ENCODE measurements at regions of chr4 and their contacts with region 1.

Region 1: GRCh38 chr4:48681856-48682255 is 98.2 kb downstream of the FRYL start:
- DNase-seq: peak; percentile 23
- ATAC-seq: peak; percentile 98
- H3K4me3 Mint-ChIP-seq: no peak overlapping the region
- H3K27ac Mint-ChIP-seq: no peak overlapping the region
- H3K4me1 Mint-ChIP-seq: peaks cover 42% of the 10 kb centered on the region
- H3K27me3 Mint-ChIP-seq: no peaks in the 10 kb centered on the region

Region 2: DNA sequence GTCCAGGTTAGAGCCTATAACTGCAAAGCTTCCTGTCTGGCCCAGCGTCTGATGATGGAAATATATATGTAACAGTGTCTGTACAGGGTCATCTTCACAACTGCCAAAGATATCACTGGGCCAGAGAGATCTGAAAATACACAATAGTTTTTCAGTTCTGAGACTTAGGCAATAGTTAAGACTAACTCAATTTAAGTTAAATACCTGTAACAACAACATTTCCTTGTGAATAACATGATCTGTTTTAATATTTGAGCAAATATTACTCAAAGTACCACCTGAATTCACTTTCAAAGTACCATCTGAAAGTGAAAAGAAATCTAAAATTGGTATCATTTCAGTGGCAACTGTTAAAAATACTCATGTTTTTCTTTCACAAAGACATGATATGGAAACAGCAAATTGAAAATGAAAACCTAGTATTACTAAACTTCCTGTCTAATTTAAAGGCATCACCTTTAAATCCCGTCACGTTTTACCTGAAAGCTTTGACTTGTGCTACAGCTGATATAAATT is 182.2 kb before region 1 on chr4:
- CTCF ChIA-PET with region 1: no interaction called
- POLR2A ChIA-PET with region 1: no interaction called
- intact Hi-C with region 1: loop called in 1 of 2 experiments (anchors 5 kb)
- DNase-seq: no peak
- ATAC-seq: peak; percentile 73
- H3K4me3 Mint-ChIP-seq: no peak overlapping the region
- H3K27ac Mint-ChIP-seq: no peak overlapping the region
- H3K4me1 Mint-ChIP-seq: peaks cover 17% of the 10 kb centered on the region
- H3K27me3 Mint-ChIP-seq: no peaks in the 10 kb centered on the region

Region 3: DNA sequence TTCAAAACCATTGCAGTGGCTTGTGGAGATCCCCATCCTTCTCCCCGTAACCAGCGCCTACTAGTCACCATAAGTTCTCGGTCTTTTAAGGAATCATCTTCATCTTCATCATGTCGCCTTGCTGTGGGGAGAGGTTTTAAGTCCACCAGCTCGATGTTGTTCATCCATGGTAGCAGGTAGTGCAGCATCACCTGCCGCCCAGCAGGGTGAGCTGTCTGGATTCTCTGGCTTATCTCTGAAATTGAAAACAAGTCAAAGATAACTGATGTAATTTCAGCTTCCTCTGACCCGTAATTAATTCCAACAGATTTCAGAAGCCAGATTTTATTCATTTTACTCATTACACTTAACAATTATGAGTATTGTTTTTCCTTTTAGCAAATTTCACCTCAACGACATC is 124.4 kb before region 1 on chr4:
- CTCF ChIA-PET with region 1: interaction called, 3 read pairs
- POLR2A ChIA-PET with region 1: no interaction called
- intact Hi-C with region 1: loop called in 1 of 2 experiments (anchors 5 kb)
- DNase-seq: peak; percentile 46
- ATAC-seq: peak; percentile 44
- H3K4me3 Mint-ChIP-seq: no peak overlapping the region
- H3K27ac Mint-ChIP-seq: no peak overlapping the region
- H3K4me1 Mint-ChIP-seq: peaks cover 10% of the 10 kb centered on the region
- H3K27me3 Mint-ChIP-seq: no peaks in the 10 kb centered on the region

Region 4: DNA sequence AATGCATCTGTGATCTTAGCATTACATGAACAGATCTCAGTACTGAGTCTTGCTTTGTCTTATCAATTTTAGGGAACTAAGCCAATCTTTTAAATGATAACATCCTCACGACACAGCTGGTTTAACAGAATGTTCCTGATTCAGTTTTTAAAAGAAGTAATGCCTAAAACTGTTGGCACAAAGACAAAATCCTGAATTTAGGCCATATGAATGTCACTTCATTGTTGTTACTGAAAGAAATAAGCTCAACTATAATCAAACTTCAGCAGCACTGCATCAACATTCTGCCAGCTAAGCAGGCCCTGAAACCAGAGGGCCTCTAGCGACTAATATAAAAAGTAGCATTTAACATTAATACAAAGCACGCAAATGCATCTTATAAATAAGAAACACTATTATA is 32.4 kb before region 1 on chr4:
- CTCF ChIA-PET with region 1: interaction called, 4 read pairs
- POLR2A ChIA-PET with region 1: no interaction called
- intact Hi-C with region 1: loop called in 1 of 2 experiments (anchors 5 kb)
- DNase-seq: no peak
- ATAC-seq: no peak
- H3K4me3 Mint-ChIP-seq: no peak overlapping the region
- H3K27ac Mint-ChIP-seq: no peak overlapping the region
- H3K4me1 Mint-ChIP-seq: peaks cover 43% of the 10 kb centered on the region
- H3K27me3 Mint-ChIP-seq: no peaks in the 10 kb centered on the region

Region 5: GRCh38 chr4:48698029-48698971 is 16.4 kb after region 1 on chr4:
- CTCF ChIA-PET with region 1: interaction called, 3 read pairs
- POLR2A ChIA-PET with region 1: no interaction called
- intact Hi-C with region 1: loop called (anchors 1 kb)
- DNase-seq: no peak
- ATAC-seq: no peak
- H3K4me3 Mint-ChIP-seq: no peak overlapping the region
- H3K27ac Mint-ChIP-seq: no peak overlapping the region
- H3K4me1 Mint-ChIP-seq: peaks cover 59% of the 10 kb centered on the region
- H3K27me3 Mint-ChIP-seq: no peaks in the 10 kb centered on the region

Region 6: GRCh38 chr4:48830706-48831531 is 149.1 kb after region 1 on chr4 and contains the start of gene OCIAD1:
- CTCF ChIA-PET with region 1: no interaction called
- POLR2A ChIA-PET with region 1: no interaction called
- intact Hi-C with region 1: loop called in 1 of 2 experiments (anchors 5 kb)
- DNase-seq: peak; percentile 96
- ATAC-seq: peak; percentile 99
- H3K4me3 Mint-ChIP-seq: peak within 1 kb of the TSS; percentile 100
- H3K27ac Mint-ChIP-seq: peak within 1 kb of the TSS; percentile 100
- H3K4me1 Mint-ChIP-seq: peaks cover 23% of the 10 kb centered on the region
- H3K27me3 Mint-ChIP-seq: no peaks in the 10 kb centered on the region
- total RNA-seq, gene OCIAD1: 113 to 162 TPM